ENCODE measurements at regions of chr19 and their contacts with region 1.

Region 1: DNA sequence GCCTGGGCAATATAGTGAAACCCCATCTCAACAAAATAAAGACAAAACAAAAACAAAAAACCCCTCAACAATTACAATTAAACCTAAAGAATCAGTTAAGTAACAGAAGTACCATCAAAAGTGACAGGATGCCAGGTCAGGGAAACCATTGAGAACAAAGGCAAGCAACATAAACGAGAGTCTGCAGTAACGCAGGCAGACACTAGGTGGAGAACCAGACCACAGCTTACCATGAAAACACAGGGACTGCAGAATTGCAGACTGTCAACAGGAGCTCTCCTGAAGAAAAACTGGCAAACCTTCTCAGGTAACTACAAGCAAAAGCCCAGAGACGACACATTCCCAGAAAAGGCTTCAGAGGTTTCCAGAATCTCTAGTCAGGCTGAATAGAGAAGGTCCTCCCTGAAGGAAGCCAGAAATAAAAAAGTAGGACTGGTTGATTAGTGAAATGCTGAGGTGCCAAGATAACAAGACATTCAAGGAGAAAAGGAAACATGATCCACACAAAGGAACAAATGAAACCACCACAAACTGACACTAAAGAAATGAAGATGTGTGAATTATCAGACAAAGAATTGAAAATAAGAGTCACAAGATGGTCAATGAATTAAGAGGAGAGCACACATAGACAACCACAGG is 2.2 kb upstream of the ZNF665 start:
- DNase-seq: no peak
- H3K4me3 ChIP-seq: no peak overlapping the region
- CTCF ChIP-seq: peak; percentile 77

Region 2: GRCh38 chr19:52853880-52854279 is 341.5 kb before region 1 on chr19:
- CTCF ChIA-PET with region 1: no interaction called
- POLR2A ChIA-PET with region 1: no interaction called
- DNase-seq: no peak
- H3K4me3 ChIP-seq: no peak overlapping the region
- CTCF ChIP-seq: no peak

Region 3: DNA sequence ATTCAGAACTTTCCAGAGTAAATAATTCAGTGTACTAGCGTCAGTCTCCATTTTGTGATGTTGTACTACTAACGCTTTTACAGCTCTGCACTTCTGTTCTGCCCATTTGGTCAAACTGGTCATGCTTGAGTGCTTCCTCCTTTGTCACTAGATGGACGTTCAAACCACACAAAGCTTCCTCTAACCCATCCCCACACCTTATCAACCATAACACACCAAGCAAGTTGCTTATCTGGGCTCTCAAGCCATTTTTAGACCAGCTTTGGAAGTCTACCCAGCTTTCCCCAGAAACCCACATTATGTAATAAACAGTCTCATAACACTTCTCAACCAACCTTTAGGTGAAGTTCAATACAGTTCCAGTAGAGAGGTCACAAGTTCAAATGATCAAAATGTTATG is 34.3 kb before region 1 on chr19:
- CTCF ChIA-PET with region 1: no interaction called
- POLR2A ChIA-PET with region 1: no interaction called
- DNase-seq: no peak
- H3K4me3 ChIP-seq: no peak overlapping the region
- CTCF ChIP-seq: no peak

Region 4: GRCh38 chr19:53183146-53183764 is 12.1 kb before region 1 on chr19:
- CTCF ChIA-PET with region 1: interaction called, 11 read pairs
- POLR2A ChIA-PET with region 1: no interaction called
- DNase-seq: no peak
- H3K4me3 ChIP-seq: no peak overlapping the region
- CTCF ChIP-seq: no peak

Region 5: DNA sequence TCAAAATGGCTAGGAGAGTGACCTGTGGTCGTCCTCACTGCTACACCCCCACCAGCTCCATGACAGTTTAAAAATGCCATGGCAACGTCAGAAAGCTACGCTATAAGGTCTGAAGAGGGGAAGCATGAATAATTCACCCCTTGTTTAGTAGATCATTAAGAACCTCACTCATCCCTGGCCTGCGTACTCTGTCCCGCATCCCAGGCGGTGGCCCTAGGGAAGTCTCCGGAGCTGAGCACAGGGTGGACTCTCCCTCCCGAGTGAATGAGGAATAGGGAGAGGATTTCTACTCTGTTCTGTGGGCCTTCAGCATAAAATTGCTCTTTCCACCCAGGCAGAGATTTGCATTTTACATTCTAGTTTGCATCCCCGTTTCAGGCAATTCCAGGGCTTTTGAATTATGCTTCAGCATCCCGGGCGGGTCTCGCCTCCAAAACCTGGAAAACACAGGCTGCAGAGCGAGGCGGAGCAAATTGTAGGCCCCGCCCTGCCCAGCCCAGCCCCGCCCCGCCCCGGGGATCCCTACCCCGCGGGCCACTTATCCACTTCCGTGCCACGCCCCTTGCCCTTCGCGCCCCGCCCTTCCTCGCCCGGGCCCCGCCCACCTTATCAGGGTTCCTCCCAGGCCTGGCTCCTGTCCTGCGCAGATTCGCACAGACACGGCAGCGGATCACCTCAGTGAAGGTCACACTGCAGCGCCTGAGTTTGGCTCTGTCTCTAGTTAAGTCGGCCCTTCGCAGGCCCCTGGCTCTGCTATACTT is 162.6 kb after region 1 on chr19:
- CTCF ChIA-PET with region 1: interaction called, 10 read pairs
- POLR2A ChIA-PET with region 1: no interaction called
- DNase-seq: no peak
- H3K4me3 ChIP-seq: no peak overlapping the region
- CTCF ChIP-seq: no peak